ENCODE measurements at regions of chr10 and their contacts with region 1.

Region 1: DNA sequence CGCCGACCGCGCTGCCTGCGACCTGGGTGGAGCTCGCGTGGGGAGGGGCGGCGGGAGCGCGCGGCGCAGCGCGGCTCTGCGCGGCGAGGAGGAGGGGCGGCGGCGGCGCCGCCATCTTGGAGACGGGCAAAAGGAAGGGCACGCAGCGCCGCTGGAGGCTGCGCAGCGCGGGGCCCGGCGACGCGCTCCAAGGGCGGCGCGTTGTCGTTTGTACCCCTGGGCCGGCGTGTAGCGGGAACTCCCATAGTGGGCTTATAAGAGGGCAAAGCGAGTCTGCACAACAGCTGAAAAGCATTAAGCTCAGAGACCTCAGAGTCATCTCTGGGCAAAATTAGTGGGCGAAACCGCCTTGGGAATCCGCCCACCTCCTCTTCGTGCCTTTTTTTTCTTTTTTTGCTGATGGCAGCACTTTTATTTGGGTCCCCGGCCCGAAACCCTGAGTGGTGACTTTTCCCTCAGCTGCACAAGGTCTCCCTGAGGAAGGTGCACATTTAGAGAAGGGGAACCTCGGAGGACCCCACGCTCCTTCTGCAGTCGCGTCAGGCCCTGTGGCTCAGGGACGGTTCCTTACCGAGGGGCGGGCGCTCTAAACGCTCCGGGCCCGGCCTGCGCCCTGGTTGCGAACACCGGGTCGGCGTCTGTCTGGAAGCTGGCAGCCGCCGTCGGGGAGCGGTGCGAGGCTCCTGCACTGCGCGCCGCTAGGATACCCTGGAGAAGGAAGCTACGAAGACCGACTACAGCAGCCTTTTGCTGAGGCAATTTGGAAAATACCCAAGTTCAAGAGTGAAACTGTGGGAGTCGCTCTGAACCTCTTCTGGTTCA is 428 bp upstream of the MCMBP start:
- DNase-seq: peak; percentile 89
- ATAC-seq: peak; percentile 92
- H3K4me3 Mint-ChIP-seq: peak overlapping the region; percentile 88
- H3K27ac Mint-ChIP-seq: peak overlapping the region; percentile 85
- H3K4me1 Mint-ChIP-seq: peaks cover 40% of the 10 kb centered on the region
- H3K27me3 Mint-ChIP-seq: no peaks in the 10 kb centered on the region
- CTCF ChIP-seq: no peak

Region 2: GRCh38 chr10:119650692-119651513 is 222.2 kb before region 1 on chr10 and contains the start of gene BAG3:
- CTCF ChIA-PET with region 1: no interaction called
- POLR2A ChIA-PET with region 1: interaction called, 9 read pairs
- intact Hi-C with region 1: loop called (anchors 1 kb)
- DNase-seq: peak; percentile 73
- ATAC-seq: peak; percentile 93
- H3K4me3 Mint-ChIP-seq: peak within 1 kb of the TSS; percentile 97
- H3K27ac Mint-ChIP-seq: peak within 1 kb of the TSS; percentile 95
- H3K4me1 Mint-ChIP-seq: peaks cover 16% of the 10 kb centered on the region
- H3K27me3 Mint-ChIP-seq: no peaks in the 10 kb centered on the region
- CTCF ChIP-seq: no peak
- total RNA-seq, gene BAG3: 4.3 and 4.7 TPM in 2 replicates

Region 3: GRCh38 chr10:119892188-119893065 is 19.4 kb after region 1 on chr10 and contains the start of gene SEC23IP:
- CTCF ChIA-PET with region 1: interaction called, 5 read pairs
- POLR2A ChIA-PET with region 1: interaction called, 60 read pairs
- intact Hi-C with region 1: loop called (anchors 1 kb)
- DNase-seq: peak; percentile 84
- ATAC-seq: peak; percentile 98
- H3K4me3 Mint-ChIP-seq: peak within 1 kb of the TSS; percentile 94
- H3K27ac Mint-ChIP-seq: peak within 1 kb of the TSS; percentile 95
- H3K4me1 Mint-ChIP-seq: peaks cover 42% of the 10 kb centered on the region
- H3K27me3 Mint-ChIP-seq: no peaks in the 10 kb centered on the region
- CTCF ChIP-seq: no peak
- total RNA-seq, gene SEC23IP: 73.8 and 79.9 TPM in 2 replicates

Measured in activated B cell treated with CpG ODN at 0.5 μM for 24 hours (primary cell).